Sigmoid colon (tissue), 7 donors: ENCODE measurements at regions of chr4 and their contacts with region 1.

Region 1: DNA sequence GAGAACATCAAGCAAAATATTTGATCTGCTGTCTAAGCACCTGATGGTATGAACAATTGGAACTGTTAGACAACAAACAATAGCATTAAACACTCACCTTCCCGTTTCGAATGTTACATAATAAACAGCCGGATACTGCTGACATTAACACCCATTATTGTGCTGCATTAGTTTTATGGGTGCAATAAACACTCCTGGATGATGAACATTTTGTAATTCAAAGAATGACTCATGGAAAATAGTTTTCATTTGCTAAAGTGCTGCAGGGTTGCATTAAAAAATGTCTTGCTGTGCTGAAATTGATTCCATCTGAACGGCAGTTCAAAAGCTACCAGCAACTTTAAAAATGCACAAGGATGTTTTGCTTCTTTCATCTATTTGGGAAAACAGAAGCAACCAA is 100.8 kb upstream of the SORBS2 start:
- DNase-seq: no peak
- H3K4me3 ChIP-seq: no peak overlapping the region
- H3K27ac ChIP-seq: peak overlapping the region in 1 of 4 donors; percentile 36
- H3K4me1 ChIP-seq: peaks cover 0 to 9% (median 7%) of the 10 kb centered on the region in 4 donors
- H3K27me3 ChIP-seq: no peaks in the 10 kb centered on the region
- CTCF ChIP-seq: no peak
- EP300 ChIP-seq: peak in 1 of 4 donors; percentile 39
- POLR2A ChIP-seq: no peak

Region 2: GRCh38 chr4:185847352-185848107 is 65.2 kb before region 1 on chr4:
- intact Hi-C with region 1: loop called (anchors 10 kb)
- DNase-seq: no peak
- H3K4me3 ChIP-seq: no peak overlapping the region
- H3K27ac ChIP-seq: peak overlapping the region; percentile 15 to 66 (median 51)
- H3K4me1 ChIP-seq: peaks cover 0 to 16% (median 5%) of the 10 kb centered on the region in 4 donors
- H3K27me3 ChIP-seq: no peaks in the 10 kb centered on the region
- CTCF ChIP-seq: no peak
- EP300 ChIP-seq: no peak
- POLR2A ChIP-seq: no peak